ENCODE measurements at regions of chr1 and their contacts with region 1.

Region 1: DNA sequence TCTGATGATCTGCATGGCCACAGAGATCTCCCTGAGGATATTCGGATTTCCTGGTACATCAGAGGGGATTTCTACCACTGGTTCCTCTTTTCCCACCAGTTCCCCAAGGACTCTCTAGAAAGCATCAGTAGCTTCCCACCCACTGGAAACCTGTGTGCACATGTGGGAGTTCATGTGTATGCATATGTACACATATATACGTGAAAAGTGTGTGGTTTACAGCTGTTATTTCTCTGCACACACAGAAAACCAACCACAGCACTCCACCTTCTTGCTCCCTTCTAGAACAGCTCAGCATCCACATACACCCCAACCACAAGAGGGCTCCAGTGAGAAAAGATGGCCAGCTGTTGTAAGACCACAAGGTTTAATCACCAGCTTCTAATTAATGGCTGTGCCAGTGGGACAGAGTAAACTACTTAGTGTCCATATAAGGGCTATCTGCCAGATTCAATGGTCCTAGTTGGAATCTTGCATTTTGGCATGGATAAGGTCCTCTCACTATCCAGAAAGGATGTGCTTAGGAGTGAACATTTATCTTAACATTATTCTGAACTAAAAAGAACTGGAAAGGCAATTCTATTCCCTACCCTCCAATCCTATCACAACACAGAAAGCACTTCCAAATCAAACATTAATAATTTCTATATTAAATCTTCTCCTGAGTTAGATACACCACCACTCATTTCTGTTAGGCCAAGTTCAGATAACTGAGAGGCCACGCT is 24.1 kb downstream of the GPR3 start:
- DNase-seq: peak; percentile 69
- ATAC-seq: peak; percentile 64
- H3K4me3 Mint-ChIP-seq: no peak overlapping the region
- H3K27ac Mint-ChIP-seq: peak overlapping the region; percentile 40
- H3K4me1 Mint-ChIP-seq: peaks cover 40% of the 10 kb centered on the region
- H3K27me3 Mint-ChIP-seq: no peaks in the 10 kb centered on the region

Region 2: DNA sequence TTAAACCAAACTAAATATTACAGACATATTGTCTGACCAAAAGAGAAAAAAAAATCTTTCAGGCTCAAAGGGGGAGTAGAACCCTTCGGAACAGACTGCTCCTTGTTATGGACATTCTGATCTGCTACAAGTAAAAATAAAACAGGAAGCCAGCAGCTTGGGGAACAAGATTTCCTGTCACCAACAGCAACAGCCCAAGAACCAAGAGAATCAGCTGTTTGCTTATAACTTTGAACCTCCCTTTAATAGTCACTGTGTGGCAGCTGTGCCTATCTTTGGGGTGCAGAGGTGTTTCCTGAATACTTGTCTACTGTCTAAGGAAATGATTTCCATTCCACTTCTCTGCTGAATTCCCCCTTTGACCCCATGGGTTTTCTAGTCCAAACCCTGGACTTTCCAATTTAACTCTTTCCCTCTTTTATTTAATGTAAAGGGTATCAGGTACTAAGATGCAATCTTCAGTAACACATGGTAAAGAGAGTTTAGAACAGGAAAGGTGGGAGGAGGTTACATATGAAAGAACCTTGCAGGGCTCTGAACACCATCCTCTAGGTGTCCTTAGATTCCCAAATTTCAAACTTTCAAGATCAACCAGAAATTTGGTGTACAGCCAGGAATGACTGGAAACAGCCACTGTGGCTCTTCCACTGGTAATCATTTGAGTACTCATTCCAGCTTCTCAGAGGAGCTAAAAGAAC is 14.5 kb after region 1 on chr1:
- CTCF ChIA-PET with region 1: interaction called, 61 read pairs
- POLR2A ChIA-PET with region 1: no interaction called
- intact Hi-C with region 1: no loop called
- DNase-seq: no peak
- ATAC-seq: peak; percentile 37
- H3K4me3 Mint-ChIP-seq: peak overlapping the region; percentile 21
- H3K27ac Mint-ChIP-seq: peak overlapping the region; percentile 79
- H3K4me1 Mint-ChIP-seq: peaks cover 85% of the 10 kb centered on the region
- H3K27me3 Mint-ChIP-seq: no peaks in the 10 kb centered on the region

Region 3: DNA sequence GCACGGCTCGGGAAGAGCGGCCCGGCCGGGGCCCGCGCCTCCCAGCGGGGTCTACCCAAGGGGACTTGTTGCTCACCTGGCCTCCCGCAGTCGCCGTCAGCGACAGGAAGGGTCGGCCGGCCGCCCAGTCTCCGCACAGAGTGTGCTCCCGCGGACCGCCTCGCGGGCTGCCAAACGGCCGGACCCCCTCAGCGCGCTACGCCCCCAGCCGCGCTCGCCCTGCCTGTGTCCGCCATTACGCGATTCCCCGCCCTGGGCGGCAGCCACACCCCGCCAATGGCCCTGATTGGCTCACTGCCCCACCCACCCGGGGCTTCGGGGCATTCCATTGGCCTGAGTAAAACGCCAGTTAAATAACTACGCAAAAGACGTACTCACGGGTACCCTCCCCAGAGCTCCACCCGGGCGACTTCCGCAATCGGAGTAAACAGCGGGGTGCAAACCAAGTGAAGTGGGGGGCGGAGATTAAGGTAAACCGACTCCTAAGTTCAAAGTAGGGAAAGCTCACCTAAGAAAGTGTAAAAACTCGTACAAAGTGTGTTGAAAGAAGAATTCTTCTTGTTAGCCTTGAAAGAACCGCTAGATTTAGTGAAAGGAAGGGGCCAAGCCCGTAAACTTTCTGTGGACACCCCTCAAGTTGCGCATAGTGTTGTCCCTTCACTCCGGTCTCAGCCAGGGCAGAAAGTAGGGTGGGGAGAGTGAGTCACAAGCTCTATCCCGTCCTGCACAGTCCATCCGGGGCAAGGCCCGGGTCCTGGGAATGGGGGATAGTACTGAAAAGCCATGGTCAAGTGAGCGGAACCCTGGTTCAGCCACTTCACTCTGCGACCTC is 73.6 kb after region 1 on chr1 and contains the start of gene WASF2:
- CTCF ChIA-PET with region 1: interaction called, 8 read pairs
- POLR2A ChIA-PET with region 1: interaction called, 5 read pairs
- intact Hi-C with region 1: loop called (anchors 1 to 2 kb)
- DNase-seq: peak; percentile 98
- ATAC-seq: peak; percentile 96
- H3K4me3 Mint-ChIP-seq: peak within 1 kb of the TSS; percentile 98
- H3K27ac Mint-ChIP-seq: peak within 1 kb of the TSS; percentile 99
- H3K4me1 Mint-ChIP-seq: peaks cover 28% of the 10 kb centered on the region
- H3K27me3 Mint-ChIP-seq: no peaks in the 10 kb centered on the region
- total RNA-seq, gene WASF2: 104 to 132 TPM

Measured in activated CD4-positive, alpha-beta T cell treated with anti-CD3 and anti-CD28 coated beads for 36 hours (primary cell).